Naive thymus-derived CD4-positive, alpha-beta T cell (primary cell): ENCODE measurements at regions of chr6 and their contacts with region 1.

Region 1: GRCh38 chr6:158819213-158819909 is at the start of gene EZR:
- DNase-seq: peak; percentile 70 to 85 (median 80)
- ATAC-seq: peak; percentile 80
- H3K4me3 ChIP-seq: peak within 1 kb of the TSS; percentile 50
- H3K4me3 Mint-ChIP-seq: peak within 1 kb of the TSS; percentile 81 to 97 (median 90)
- H3K27ac ChIP-seq: peak within 1 kb of the TSS; percentile 99
- H3K27ac Mint-ChIP-seq: peak within 1 kb of the TSS; percentile 89 to 97 (median 91)
- H3K4me1 ChIP-seq: peaks cover 21 to 24% of the 10 kb centered on the region in 2 donors
- H3K4me1 Mint-ChIP-seq: peaks cover 30 to 47% (median 36%) of the 10 kb centered on the region in 7 donors
- H3K27me3 ChIP-seq: no peaks in the 10 kb centered on the region
- H3K27me3 Mint-ChIP-seq: no peaks in the 10 kb centered on the region
- total RNA-seq, gene EZR: 132 to 201 (median 163) TPM

Region 2: GRCh38 chr6:158718461-158719046 is 100.8 kb before region 1 on chr6:
- CTCF ChIA-PET with region 1: no interaction called
- POLR2A ChIA-PET with region 1: no interaction called
- intact Hi-C with region 1: loop called in 1 of 2 experiments (anchors 5 kb)
- DNase-seq: no peak
- ATAC-seq: no peak
- H3K4me3 ChIP-seq: no peak overlapping the region
- H3K4me3 Mint-ChIP-seq: peak overlapping the region in 2 of 10 donors; percentile 3 to 56
- H3K27ac ChIP-seq: no peak overlapping the region
- H3K27ac Mint-ChIP-seq: peak overlapping the region in 4 of 9 donors; percentile 73 to 90 (median 80)
- H3K4me1 ChIP-seq: peaks cover 10 to 58% of the 10 kb centered on the region in 2 donors
- H3K4me1 Mint-ChIP-seq: peaks cover 28 to 71% (median 36%) of the 10 kb centered on the region in 7 donors
- H3K27me3 ChIP-seq: no peaks in the 10 kb centered on the region
- H3K27me3 Mint-ChIP-seq: no peaks in the 10 kb centered on the region

Region 3: DNA sequence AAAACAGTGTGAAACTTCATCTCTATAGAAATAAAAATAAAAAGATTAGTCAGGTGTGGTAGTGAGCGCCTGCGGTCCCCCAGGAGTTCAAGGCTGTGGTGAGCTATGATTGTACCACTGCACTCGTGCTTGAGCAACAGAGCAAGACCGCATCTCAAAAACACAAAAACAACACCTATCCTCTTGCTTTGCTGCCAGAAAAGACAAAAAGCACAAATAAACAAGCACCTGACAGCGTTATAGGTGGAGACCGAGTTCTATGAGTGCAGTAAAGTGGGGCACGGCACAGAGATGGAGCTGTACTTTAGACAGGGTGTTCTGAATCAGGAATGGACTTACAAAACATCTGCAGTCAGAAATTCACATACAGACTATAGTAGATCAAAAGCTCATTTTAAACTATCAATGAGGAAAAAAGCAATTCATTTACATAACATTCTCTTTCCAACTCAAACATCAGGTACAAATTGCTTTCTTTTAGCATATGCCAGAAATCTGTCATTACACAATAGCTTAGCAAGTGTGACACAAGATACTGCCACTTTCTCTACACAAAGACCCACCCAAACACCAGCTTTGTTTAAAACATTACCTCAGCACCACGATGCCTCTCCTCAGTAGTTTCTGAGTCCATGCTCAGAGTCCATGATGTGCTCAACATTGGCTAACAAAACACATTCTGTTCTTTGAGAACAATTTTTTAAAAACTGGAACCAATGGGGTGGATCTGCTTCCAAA is 10.3 kb before region 1 on chr6:
- CTCF ChIA-PET with region 1: no interaction called
- POLR2A ChIA-PET with region 1: interaction called, 7 read pairs
- intact Hi-C with region 1: loop called (anchors 1 kb)
- DNase-seq: peak in 2 of 9 donors; percentile 35
- ATAC-seq: peak; percentile 31
- H3K4me3 ChIP-seq: no peak overlapping the region
- H3K4me3 Mint-ChIP-seq: peak overlapping the region in 9 of 10 donors; percentile 9 to 53 (median 35)
- H3K27ac ChIP-seq: no peak overlapping the region
- H3K27ac Mint-ChIP-seq: peak overlapping the region in 6 of 9 donors; percentile 50 to 79 (median 72)
- H3K4me1 ChIP-seq: peaks cover 78 to 94% of the 10 kb centered on the region in 2 donors
- H3K4me1 Mint-ChIP-seq: peaks cover 63 to 100% (median 97%) of the 10 kb centered on the region in 7 donors
- H3K27me3 ChIP-seq: no peaks in the 10 kb centered on the region
- H3K27me3 Mint-ChIP-seq: no peaks in the 10 kb centered on the region

Region 4: DNA sequence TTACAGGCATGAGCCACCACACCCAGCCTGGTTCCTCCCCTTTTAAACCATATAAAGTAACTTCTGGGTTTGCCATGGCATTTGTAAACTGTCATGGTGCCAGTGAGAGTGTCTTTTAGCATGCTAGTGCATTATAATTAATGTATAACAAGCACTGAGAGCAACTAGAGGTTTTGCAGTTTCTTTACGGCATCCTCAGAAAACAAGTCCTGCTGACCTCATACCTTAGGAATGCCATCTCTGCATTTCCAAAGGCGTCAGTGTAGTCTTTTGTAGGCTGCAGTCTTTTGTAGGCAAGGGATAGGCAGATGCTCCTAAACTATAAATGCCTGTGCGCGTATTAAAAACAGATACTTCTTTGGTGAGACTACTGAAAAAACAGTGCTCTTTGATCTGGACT is 74.8 kb after region 1 on chr6:
- CTCF ChIA-PET with region 1: no interaction called
- POLR2A ChIA-PET with region 1: no interaction called
- intact Hi-C with region 1: no loop called
- DNase-seq: no peak
- ATAC-seq: no peak
- H3K4me3 ChIP-seq: no peak overlapping the region
- H3K4me3 Mint-ChIP-seq: no peak overlapping the region
- H3K27ac ChIP-seq: no peak overlapping the region
- H3K27ac Mint-ChIP-seq: no peak overlapping the region
- H3K4me1 ChIP-seq: no peaks in the 10 kb centered on the region
- H3K4me1 Mint-ChIP-seq: peaks cover 0 to 2% (median 0%) of the 10 kb centered on the region in 7 donors
- H3K27me3 ChIP-seq: no peaks in the 10 kb centered on the region
- H3K27me3 Mint-ChIP-seq: peaks cover 0 to 2% (median 0%) of the 10 kb centered on the region in 5 donors

Region 5: DNA sequence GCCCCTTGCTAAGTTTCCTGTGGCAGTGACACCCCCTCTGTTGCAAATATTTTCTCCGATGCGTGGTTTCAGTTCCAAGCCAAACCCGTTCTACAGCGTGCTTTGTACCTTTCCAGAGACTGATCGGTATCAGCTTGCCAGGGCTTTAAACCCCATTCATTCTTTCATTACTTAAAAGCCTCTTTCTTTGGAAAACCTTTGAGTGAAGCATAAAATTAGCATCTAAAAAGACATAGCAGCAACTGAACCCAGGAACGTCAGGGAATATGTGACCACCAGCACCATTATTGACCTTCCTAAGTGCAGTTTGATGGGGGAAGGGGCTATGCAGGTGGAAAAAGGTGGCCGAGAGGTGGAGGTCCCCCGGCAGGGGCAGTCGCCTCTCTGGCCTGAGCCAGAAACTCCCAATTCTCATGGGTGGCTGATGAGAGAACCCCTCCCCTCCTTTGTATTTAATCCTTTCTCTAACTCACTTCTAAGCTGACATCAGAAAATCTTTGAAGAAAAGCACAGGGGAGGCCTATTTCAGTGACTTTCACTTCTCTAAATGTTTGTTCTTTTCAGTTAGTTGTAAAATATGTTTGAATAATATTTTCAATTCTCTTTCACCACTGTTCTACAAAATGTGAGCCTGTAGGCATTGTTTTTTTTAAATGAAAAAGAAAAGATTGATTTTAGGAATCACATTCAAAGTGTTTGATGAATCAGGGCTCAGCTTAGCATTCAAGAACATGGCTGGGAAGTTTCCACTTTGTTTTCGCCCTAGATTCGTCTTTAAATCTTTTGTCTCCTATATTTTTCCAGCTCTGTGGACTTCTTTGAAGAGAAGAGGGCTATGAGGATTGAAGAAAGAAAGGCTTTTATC is 91.4 kb after region 1 on chr6:
- CTCF ChIA-PET with region 1: no interaction called
- POLR2A ChIA-PET with region 1: no interaction called
- intact Hi-C with region 1: loop called in 1 of 2 experiments (anchors 2 kb)
- DNase-seq: peak in 4 of 9 donors; percentile 25 to 32 (median 28)
- ATAC-seq: peak; percentile 59
- H3K4me3 ChIP-seq: peak overlapping the region; percentile 24
- H3K4me3 Mint-ChIP-seq: peak overlapping the region; percentile 63 to 83 (median 74)
- H3K27ac ChIP-seq: peak overlapping the region; percentile 52
- H3K27ac Mint-ChIP-seq: peak overlapping the region in 8 of 9 donors; percentile 69 to 91 (median 83)
- H3K4me1 ChIP-seq: peaks cover 23 to 32% of the 10 kb centered on the region in 2 donors
- H3K4me1 Mint-ChIP-seq: peaks cover 26 to 46% (median 37%) of the 10 kb centered on the region in 7 donors
- H3K27me3 ChIP-seq: no peaks in the 10 kb centered on the region
- H3K27me3 Mint-ChIP-seq: peaks cover 0 to 3% (median 0%) of the 10 kb centered on the region in 5 donors